Endothelial cell of umbilical vein (primary cell): ENCODE measurements at regions of chr7 and their contacts with region 1.

Region 1: DNA sequence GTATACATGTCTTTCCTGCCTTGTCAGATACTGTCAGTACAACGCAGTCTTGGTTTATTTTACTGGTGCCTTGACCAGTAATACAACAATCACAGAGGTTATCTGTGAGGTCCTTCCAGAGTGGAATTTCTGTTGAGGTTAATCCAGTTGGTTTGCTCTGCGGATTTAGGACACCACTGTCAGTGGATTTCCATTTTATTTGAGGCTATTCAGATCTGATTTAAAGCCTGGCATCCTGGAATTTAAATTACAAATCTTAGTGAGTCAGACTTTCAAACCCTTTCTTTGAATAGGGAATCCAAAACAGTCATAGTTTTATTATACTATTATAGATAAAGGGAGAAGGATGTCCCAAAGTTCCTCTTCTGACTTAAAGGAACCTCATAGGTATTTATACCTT is 40.5 kb downstream of the ANLN start:
- DNase-seq: no peak
- H3K4me3 ChIP-seq: no peak overlapping the region
- H3K27ac ChIP-seq: no peak overlapping the region
- H3K4me1 ChIP-seq: peaks cover 5% of the 10 kb centered on the region
- H3K27me3 ChIP-seq: no peaks in the 10 kb centered on the region
- CTCF ChIP-seq: no peak
- POLR2A ChIP-seq: no peak

Region 2: DNA sequence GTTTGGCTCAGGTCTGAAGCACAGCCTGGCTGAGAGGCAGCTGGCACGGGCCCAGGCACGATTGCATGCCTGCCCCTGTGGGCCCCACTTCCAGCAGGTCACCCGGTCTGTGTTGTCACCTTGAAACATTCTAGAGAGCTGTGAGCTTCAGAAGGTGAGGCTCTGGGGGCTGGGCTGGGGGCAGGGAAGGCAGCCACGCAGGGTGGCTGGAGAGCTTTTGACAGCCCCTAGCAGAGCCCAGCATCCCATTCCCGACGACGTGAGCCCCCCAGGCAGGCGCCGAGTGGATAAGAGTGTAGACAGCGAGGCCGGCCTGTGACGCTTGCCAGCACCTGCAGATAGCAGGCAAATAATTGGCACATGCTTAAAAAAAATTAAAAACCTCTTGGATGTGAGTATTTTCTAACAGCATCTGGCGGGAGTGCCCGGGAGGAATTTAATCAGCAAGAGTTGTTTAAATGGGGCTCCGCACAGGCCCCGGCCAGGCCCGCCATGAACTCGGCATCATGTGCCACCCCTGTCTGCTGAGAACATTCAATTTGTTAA is 964.3 kb before region 1 on chr7:
- CTCF ChIA-PET with region 1: no interaction called
- POLR2A ChIA-PET with region 1: no interaction called
- dilution Hi-C with region 1: no loop called
- intact Hi-C with region 1: no loop called
- DNase-seq: no peak
- H3K4me3 ChIP-seq: no peak overlapping the region
- H3K27ac ChIP-seq: no peak overlapping the region
- H3K4me1 ChIP-seq: no peaks in the 10 kb centered on the region
- H3K27me3 ChIP-seq: no peaks in the 10 kb centered on the region
- CTCF ChIP-seq: no peak
- POLR2A ChIP-seq: no peak

Region 3: DNA sequence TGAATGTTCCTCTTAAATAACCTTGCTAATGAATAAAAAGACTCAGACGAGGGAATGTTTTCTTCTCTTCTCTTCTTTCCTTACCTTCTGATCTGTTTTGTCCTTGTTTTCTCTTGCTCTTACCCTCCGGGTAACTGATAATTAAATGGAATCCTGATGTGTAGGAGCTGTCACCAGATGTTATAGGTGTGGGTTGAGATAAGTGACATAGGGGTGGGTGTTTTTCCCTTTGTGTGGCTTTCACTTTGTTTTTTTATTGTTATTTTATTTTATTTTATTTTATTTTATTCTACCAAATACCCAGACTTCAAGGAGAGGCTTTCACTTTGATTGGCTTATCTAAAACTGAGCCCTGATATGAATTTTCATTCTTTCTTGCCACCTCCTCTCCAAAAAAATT is 15.0 kb before region 1 on chr7:
- CTCF ChIA-PET with region 1: no interaction called
- POLR2A ChIA-PET with region 1: no interaction called
- dilution Hi-C with region 1: no loop called
- intact Hi-C with region 1: loop called (anchors 2 kb)
- DNase-seq: no peak
- H3K4me3 ChIP-seq: no peak overlapping the region
- H3K27ac ChIP-seq: no peak overlapping the region
- H3K4me1 ChIP-seq: no peaks in the 10 kb centered on the region
- H3K27me3 ChIP-seq: no peaks in the 10 kb centered on the region
- CTCF ChIP-seq: no peak
- POLR2A ChIP-seq: no peak